A549 (cell line): ENCODE measurements at regions of chr12 and their contacts with region 1.

Region 1: GRCh38 chr12:117836999-117837736 is 131.6 kb downstream of the KSR2 start:
- DNase-seq: peak; percentile 77 to 84
- ATAC-seq: peak; percentile 77 to 92
- H3K4me3 ChIP-seq: no peak overlapping the region
- H3K27ac ChIP-seq: peak overlapping the region; percentile 37 to 60; a peak in 5 of 6 replicates
- H3K4me1 ChIP-seq: peaks cover 13% of the 10 kb centered on the region
- CTCF ChIP-seq: peak; percentile 94
- EP300 ChIP-seq: no peak
- POLR2A ChIP-seq: no peak
- RAD21 ChIP-seq: peak; percentile 99 to 100

Region 2: DNA sequence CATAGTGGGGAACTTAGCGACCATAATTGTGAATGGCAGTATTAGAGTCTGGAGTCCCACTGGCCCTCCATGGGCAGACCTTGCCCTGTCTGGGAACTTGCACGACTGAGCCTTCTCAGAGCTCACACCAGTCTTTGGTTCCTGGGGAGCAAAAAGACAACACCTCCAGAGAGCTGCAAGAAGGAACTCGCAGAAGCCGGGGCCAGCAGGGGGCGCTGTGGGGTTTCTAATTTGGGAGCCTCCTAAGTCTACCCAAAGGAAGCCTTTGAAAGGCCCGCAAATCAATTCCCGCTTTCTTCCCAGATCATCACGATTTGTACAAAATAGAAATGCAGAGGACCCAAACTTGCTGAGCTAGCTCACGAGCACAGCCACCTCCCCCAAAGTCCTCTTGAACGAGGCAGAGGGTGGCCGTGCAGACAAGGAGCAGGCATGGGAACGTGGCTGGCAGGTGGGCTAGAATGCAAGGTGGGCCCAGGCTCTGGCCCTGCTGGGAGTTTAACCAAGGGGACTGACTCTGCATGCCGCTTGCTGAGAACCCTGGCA is 600.6 kb before region 1 on chr12:
- CTCF ChIA-PET with region 1: interaction called, 58 read pairs
- POLR2A ChIA-PET with region 1: no interaction called
- DNase-seq: peak; percentile 69 to 82
- ATAC-seq: peak; percentile 91 to 95
- H3K4me3 ChIP-seq: no peak overlapping the region
- H3K27ac ChIP-seq: no peak overlapping the region
- H3K4me1 ChIP-seq: no peaks in the 10 kb centered on the region
- CTCF ChIP-seq: peak; percentile 88
- EP300 ChIP-seq: no peak
- POLR2A ChIP-seq: no peak
- RAD21 ChIP-seq: peak; percentile 88 to 89

Region 3: DNA sequence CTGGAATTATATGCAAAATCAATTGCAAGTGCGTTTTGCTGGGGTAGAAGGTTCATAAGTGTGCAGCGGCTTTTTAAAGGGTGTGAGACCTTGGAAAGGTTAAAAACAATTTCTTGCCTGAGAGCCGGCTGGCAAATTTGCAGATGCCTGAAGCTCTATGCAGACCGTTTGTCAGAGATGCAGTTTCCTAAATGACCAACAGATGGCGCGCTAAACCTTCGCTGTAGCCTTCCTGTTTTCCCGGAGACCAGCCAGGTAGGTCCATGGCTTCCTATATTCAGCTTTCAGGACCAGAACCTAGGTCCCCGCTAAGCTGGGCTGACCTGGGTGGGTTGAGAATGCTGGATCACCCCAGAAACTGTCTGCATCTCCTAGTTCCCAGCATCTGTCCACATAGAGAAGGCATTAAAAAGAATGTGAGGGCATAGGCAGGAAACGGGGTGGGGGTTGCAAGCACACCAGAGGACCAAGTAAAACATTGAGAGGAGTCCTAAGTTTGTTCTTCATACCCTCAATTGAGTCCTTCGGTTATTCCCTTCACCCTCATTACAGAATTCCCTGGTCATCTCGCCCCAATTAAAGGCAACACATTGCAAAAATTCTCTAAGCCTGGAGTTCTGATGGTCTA is 470.0 kb before region 1 on chr12:
- CTCF ChIA-PET with region 1: interaction called, 189 read pairs
- POLR2A ChIA-PET with region 1: interaction called, 3 read pairs
- DNase-seq: peak; percentile 85 to 90
- ATAC-seq: peak; percentile 41 to 86; a peak in 4 of 6 replicates
- H3K4me3 ChIP-seq: no peak overlapping the region
- H3K27ac ChIP-seq: peak overlapping the region; percentile 13 to 36; a peak in 3 of 6 replicates
- H3K4me1 ChIP-seq: 0 out of 3 replicates have a peak, but pooled peaks cover 3% of the 10 kb centered on the region
- CTCF ChIP-seq: peak; percentile 96
- EP300 ChIP-seq: no peak
- POLR2A ChIP-seq: no peak
- RAD21 ChIP-seq: peak; percentile 98 to 99

Region 4: DNA sequence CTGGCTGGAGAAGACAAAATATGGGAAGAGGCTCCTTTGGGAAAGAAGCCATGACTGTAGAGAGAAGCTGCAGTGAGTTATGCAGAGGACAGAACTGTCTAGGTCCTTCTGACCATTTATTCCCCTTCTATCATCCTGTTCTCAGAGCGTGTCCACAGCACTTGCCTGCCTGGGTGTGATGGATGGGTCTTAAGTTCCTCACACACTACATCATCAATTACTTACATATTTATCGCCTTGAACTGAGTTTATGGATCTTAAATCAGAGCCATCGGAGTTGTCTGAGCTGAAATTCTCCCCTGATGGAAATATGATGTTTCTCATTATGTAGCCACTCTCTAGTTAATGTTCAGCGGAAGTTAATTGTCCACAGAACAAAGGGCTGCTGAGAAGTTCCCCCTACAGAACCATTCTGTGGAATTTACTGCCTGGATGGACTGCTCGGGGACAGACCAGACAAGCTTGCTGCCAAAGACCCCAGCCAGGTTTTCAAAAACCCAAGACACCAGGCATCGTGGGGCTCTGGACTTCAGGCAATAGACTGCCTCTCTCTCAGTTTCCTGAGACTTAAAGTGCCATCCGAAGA is 243.3 kb before region 1 on chr12:
- CTCF ChIA-PET with region 1: interaction called, 58 read pairs
- POLR2A ChIA-PET with region 1: no interaction called
- DNase-seq: no peak
- ATAC-seq: no peak
- H3K4me3 ChIP-seq: no peak overlapping the region
- H3K27ac ChIP-seq: no peak overlapping the region
- H3K4me1 ChIP-seq: peaks cover 7% of the 10 kb centered on the region; the same call in 1 of the 3 replicates
- CTCF ChIP-seq: no peak
- EP300 ChIP-seq: no peak
- POLR2A ChIP-seq: no peak
- RAD21 ChIP-seq: no peak

Region 5: DNA sequence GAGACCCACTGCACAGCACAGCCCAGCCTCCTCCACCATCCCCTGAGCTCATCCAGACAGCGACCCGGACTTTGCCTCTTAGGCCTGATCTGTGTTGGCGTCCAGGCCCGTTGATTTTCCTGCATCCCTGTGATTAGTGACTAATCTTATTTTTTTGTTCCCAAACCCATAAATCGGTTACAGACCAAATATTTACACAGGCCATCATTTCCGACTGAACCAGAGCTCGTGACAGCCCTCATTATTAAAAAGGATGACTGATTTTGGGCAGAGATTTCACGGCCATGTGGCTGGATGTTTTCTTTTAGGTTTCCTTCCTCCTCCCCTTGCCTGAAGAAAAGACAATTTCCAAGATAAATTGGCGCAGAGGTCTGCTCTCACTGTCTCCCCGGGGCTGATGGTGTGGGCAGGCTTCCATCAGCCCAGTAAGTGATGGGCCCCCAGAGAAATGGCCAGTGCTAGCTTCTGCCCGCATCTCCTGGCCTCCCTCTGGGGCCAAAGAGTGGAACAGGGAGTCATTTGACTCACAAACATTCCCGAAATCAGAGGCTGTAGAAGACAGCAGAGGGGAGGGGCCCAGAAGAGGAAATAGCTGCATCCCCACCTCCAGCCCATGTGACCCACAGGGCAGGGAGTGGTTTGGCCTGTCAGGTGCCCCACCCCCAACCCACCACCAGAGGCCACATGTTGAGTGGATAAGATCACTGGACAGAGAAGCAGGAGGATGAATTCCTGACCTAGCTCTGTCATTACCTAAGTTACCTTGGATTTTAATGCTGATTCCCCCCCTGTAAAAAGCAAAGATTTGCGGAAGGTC is 151.8 kb before region 1 on chr12:
- CTCF ChIA-PET with region 1: interaction called, 15 read pairs
- POLR2A ChIA-PET with region 1: interaction called, 4 read pairs
- DNase-seq: peak; percentile 95 to 96
- ATAC-seq: peak; percentile 88 to 91
- H3K4me3 ChIP-seq: no peak overlapping the region
- H3K27ac ChIP-seq: peak overlapping the region; percentile 94 to 96
- H3K4me1 ChIP-seq: peaks cover 69% of the 10 kb centered on the region
- CTCF ChIP-seq: no peak
- EP300 ChIP-seq: peak; percentile 72 to 85; a peak in 4 of 5 replicates
- POLR2A ChIP-seq: peak; percentile 16; the same call in 1 of the 2 replicates
- RAD21 ChIP-seq: peak; percentile 12 to 29; a peak in 3 of 5 replicates

Region 6: GRCh38 chr12:117875744-117876435 is 38.7 kb after region 1 on chr12:
- CTCF ChIA-PET with region 1: no interaction called
- POLR2A ChIA-PET with region 1: no interaction called
- DNase-seq: no peak
- ATAC-seq: no peak
- H3K4me3 ChIP-seq: no peak overlapping the region
- H3K27ac ChIP-seq: no peak overlapping the region
- H3K4me1 ChIP-seq: no peaks in the 10 kb centered on the region
- CTCF ChIP-seq: no peak
- EP300 ChIP-seq: no peak
- POLR2A ChIP-seq: no peak
- RAD21 ChIP-seq: no peak